ENCODE measurements at regions of chr19 and their contacts with region 1.

Region 1: GRCh38 chr19:3491396-3492119 is 8.3 kb upstream of the SMIM44 start:
- DNase-seq: no peak
- H3K4me3 ChIP-seq: no peak overlapping the region
- H3K4me3 Mint-ChIP-seq: no peak overlapping the region
- H3K27ac Mint-ChIP-seq: no peak overlapping the region
- H3K4me1 ChIP-seq: no peaks in the 10 kb centered on the region
- H3K4me1 Mint-ChIP-seq: no peaks in the 10 kb centered on the region
- H3K27me3 ChIP-seq: no peaks in the 10 kb centered on the region
- H3K27me3 Mint-ChIP-seq: no peaks in the 10 kb centered on the region
- CTCF ChIP-seq: no peak

Region 2: DNA sequence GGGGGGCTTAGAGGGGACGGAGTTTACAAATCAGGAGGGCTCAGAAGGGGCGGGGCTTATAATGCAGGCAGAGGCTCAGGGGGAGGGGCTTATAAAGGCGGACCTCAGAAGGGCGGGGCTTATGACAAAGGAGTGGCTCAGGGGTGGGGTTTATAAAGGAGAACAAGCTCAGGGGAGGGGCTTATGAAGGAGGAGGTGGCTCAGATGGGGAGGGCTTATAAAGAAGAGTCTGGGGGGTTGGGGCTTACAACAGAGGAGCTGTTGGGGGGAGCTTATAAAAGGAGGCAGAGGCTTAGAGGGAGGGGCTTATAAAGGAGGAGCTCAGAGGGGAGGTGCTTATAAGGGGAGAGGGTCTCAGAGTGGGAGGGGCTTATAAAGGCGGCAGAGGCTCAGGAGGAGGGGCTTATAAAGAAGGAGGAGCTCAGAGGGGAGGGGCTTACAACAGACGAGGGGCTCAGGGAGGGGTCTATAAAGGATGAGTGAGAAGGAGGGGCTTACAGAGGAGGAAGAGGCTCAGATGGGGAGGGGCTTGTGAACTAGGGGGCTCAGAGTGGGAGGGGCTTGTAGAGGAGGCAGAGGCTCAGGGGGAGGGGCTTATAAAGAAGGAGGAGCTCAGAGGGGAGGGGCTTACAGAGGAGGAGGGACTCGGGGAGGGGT is 12.3 kb before region 1 on chr19:
- CTCF ChIA-PET with region 1: interaction called, 12 read pairs
- POLR2A ChIA-PET with region 1: no interaction called
- intact Hi-C with region 1: no loop called
- DNase-seq: no peak
- H3K4me3 ChIP-seq: no peak overlapping the region
- H3K4me3 Mint-ChIP-seq: no peak overlapping the region
- H3K27ac Mint-ChIP-seq: no peak overlapping the region
- H3K4me1 ChIP-seq: peaks cover 31% of the 10 kb centered on the region
- H3K4me1 Mint-ChIP-seq: peaks cover 5% of the 10 kb centered on the region
- H3K27me3 ChIP-seq: no peaks in the 10 kb centered on the region
- H3K27me3 Mint-ChIP-seq: no peaks in the 10 kb centered on the region
- CTCF ChIP-seq: no peak